Activated T-helper 1 cell treated with anti-CD3 and anti-CD28 coated beads, Interleukin-12 subunit alpha, Interleukin-12 subunit beta, Interleukin-2, Interleukin-4 antibody, amounts not matched to agents 30 ng/mL and 10 ng/mL and 1 ng/mL, durations not matched to agents 14 hours and 24 hours and 36 hours (primary cell): ENCODE measurements at regions of chr2 and their contacts with region 1.

Region 1: DNA sequence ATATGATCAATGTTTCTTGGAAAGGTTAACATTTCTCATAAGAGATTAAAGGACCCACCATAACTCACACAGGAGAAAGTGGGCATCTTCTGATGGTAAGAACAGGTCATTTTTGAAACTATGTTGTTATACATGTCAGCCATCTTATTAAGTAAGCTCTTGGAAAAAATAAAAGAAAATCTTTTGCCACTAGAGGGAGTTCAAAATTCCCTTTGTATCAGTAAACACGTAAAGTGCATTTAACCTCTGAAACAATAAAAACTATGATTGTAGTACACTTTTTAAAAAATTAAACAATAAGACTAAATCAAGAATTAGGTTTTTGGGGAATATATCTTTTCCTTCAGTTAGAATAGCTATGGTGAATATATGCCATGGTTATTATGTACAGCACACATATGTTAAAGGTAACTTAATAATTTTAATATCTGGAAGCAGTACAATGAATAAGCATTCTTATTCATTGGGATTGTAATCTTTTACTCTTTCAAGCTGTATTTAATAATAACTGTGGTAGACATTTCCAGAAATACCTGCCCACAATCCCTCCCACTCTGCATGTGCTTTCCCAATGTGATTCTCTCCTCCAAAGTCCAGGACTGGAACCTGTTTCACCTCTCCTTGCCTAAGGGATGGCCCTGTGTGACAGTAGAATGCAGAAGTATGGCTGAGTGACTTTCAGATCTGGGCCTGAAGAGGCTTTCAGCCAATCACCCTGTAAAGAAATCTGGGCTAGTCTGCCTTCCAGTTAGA is 64.2 kb downstream of the RBMS1 start:
- DNase-seq: no peak
- H3K4me3 Mint-ChIP-seq: no peak overlapping the region
- H3K27ac Mint-ChIP-seq: no peak overlapping the region
- H3K4me1 Mint-ChIP-seq: peaks cover 66% of the 10 kb centered on the region
- H3K27me3 Mint-ChIP-seq: no peaks in the 10 kb centered on the region

Region 2: DNA sequence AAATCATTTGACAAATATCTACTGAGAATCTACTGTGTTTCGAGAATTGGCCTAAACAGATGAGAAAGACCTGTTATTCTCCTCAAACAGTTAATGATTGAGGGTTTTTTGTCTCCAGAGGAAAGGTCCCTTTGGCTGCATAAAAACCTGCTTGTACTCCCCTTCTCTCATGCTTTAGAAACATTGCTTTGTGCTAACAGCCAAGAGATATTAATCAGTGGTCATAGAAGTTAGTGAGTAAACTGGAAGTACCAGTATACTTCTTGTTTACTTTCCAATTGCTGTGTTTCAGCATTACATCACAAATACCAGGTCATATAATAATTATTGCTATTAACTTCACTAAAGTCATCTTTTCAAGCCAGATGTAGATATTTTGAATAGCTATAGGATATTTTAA is 263.4 kb before region 1 on chr2:
- intact Hi-C with region 1: no loop called
- DNase-seq: no peak
- H3K4me3 Mint-ChIP-seq: no peak overlapping the region
- H3K27ac Mint-ChIP-seq: no peak overlapping the region
- H3K4me1 Mint-ChIP-seq: no peaks in the 10 kb centered on the region
- H3K27me3 Mint-ChIP-seq: no peaks in the 10 kb centered on the region

Region 3: DNA sequence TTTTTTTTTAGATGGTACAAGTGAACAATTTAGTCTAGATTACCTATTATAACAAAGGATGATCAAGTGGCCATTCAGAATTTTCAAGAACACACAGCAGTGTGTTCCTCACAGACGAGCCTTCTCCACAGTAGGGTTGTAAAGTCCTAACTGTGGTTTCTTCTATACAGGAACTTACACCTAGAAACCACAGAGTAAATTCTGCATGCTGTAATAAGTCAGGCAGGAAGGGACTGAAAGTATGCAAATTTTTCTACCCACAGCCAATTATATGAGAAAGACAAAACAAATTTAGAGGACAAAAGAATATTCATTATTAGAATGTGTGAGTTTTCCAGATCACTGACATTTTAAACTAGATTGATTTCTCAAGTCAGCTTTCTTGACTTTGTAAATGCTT is 35.3 kb before region 1 on chr2:
- intact Hi-C with region 1: loop called (anchors 5 kb)
- DNase-seq: no peak
- H3K4me3 Mint-ChIP-seq: peak overlapping the region; percentile 61
- H3K27ac Mint-ChIP-seq: peak overlapping the region; percentile 46
- H3K4me1 Mint-ChIP-seq: peaks cover 49% of the 10 kb centered on the region
- H3K27me3 Mint-ChIP-seq: no peaks in the 10 kb centered on the region

Region 4: DNA sequence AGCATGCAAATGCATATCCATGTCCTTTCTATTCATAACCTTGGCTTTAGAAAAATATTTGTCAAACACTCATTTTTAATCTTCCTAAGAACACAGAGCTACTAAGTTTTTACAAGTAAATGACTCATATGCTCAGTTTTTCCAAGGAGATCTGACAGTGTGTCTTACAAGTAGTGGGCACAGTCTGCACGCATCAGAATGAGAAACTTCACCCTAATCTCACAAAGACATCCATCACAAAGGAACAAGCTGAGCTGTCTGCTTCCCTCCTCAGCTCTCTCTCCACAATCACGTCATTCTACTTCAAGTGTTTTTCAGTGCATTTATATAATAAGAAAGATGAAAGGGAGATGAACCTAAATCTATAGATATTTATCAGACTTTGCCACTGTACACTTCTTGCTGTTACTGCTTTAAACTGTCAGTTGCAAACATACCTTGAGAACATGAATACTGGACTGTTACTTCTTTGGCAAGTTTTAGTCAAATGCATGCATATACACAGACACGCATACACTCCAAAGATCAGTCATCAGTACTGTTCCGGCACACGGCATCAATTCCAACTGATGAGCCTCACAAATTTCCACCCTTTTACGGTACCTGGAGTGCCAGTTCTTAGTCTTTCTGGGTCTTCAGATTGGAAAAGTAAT is 11.6 kb before region 1 on chr2:
- intact Hi-C with region 1: loop called (anchors 1 kb)
- DNase-seq: no peak
- H3K4me3 Mint-ChIP-seq: peak overlapping the region; percentile 6
- H3K27ac Mint-ChIP-seq: peak overlapping the region; percentile 62
- H3K4me1 Mint-ChIP-seq: peaks cover 65% of the 10 kb centered on the region
- H3K27me3 Mint-ChIP-seq: no peaks in the 10 kb centered on the region

Region 5: GRCh38 chr2:160472839-160473251 is 43.4 kb after region 1 on chr2:
- intact Hi-C with region 1: loop called (anchors 2 kb)
- DNase-seq: no peak
- H3K4me3 Mint-ChIP-seq: peak overlapping the region; percentile 49
- H3K27ac Mint-ChIP-seq: peak overlapping the region; percentile 59
- H3K4me1 Mint-ChIP-seq: peaks cover 67% of the 10 kb centered on the region
- H3K27me3 Mint-ChIP-seq: no peaks in the 10 kb centered on the region

Region 6: GRCh38 chr2:160505256-160505655 is 75.8 kb after region 1 on chr2:
- intact Hi-C with region 1: loop called (anchors 1 kb)
- DNase-seq: no peak
- H3K4me3 Mint-ChIP-seq: no peak overlapping the region
- H3K27ac Mint-ChIP-seq: no peak overlapping the region
- H3K4me1 Mint-ChIP-seq: peaks cover 29% of the 10 kb centered on the region
- H3K27me3 Mint-ChIP-seq: peaks cover 3% of the 10 kb centered on the region

Region 7: GRCh38 chr2:160522951-160523710 is 93.7 kb after region 1 on chr2:
- intact Hi-C with region 1: no loop called
- DNase-seq: no peak
- H3K4me3 Mint-ChIP-seq: no peak overlapping the region
- H3K27ac Mint-ChIP-seq: no peak overlapping the region
- H3K4me1 Mint-ChIP-seq: no peaks in the 10 kb centered on the region
- H3K27me3 Mint-ChIP-seq: no peaks in the 10 kb centered on the region

Region 8: DNA sequence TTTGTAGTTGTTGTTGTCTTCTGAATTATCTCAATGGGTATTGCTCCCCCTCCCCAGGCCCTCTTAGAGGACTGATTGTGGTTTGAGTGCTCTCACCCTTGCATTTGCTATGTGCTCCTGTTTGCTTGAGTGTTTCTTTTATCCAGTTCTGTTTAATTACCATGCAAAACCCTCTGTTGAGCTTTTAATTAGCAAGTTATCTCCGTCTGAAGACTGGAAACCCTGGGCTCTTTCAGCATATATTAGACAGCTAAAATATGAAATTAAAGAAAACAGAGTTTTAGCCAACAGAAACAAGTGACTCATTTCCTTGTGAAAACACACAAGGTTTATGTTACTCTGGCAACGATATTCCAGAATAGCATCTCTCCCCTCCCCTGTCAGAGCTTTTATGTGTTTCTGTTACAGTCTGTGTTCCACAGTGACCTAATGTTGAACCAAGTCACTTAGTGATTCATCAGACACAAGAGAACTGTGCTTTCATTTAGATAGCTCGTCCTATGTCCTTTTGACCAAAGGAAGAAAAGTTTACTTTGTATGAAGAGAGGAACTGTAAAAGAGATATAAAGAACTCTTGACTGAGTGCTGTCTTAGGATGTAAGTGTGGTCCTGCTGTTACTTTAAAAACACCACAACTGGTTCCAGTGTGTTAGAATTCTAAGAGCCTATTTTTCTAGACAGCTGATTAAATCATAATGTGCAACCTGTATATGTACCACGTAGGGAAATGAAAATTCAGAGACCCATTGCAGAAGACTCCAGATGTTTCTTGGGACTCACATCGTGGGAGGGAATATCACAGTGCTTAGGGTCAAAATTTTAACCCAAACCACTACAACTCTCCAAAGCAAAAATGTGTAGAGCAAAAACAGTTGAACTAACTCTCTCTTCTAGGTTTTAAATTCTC is 237.0 kb after region 1 on chr2:
- intact Hi-C with region 1: loop called (anchors 5 kb)
- DNase-seq: no peak
- H3K4me3 Mint-ChIP-seq: no peak overlapping the region
- H3K27ac Mint-ChIP-seq: peak overlapping the region; percentile 36
- H3K4me1 Mint-ChIP-seq: peaks cover 21% of the 10 kb centered on the region
- H3K27me3 Mint-ChIP-seq: no peaks in the 10 kb centered on the region